CD4-positive, alpha-beta T cell (primary cell): ENCODE measurements at regions of chr2 and their contacts with region 1.

Region 1: DNA sequence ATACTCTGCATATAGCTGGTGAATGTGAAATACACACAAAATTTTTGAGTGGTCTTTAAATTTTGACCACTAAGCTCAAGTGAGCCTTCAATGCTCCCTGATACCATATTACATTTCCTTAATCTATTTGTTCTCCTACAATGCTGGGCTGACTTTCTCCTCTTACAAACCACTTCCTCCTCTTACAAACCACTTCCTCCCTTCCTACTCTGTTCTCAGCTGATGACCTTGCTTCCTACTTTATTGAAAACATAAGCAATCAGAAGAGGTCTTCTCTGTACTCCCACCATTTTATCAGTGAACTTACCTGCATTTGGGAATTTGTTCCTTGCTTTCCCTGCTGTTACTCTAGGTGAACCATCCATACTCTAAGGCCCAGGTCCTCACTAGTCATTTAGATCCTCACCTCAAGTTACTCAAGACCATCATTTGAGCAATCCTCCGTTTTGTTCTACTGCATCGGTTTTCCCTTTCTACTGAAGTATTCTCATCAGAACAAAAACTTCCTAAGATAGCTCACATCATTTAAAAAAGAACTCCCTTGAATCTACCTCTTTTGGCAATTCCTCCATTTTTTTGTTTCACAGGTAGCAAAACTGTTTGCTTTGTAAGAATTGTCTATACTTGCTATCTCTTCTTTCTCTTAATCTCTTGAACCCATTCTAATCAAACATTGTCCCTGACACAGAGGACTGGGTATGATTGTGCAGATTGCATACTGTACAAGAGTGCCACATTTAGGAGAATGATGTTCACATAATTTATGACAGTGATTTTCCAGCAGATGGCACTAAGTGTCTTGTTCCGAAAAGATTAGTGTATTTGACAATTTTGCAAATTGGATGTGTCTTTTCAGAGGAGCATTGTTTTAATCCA is 96.5 kb downstream of the EPB41L5 start:
- DNase-seq: peak in 4 of 14 experiments; percentile 3 to 83 (median 55)
- ATAC-seq: peak; percentile 83
- H3K4me3 ChIP-seq: peak overlapping the region; percentile 5
- H3K4me3 Mint-ChIP-seq: peak overlapping the region; percentile 44
- H3K27ac ChIP-seq: no peak overlapping the region
- H3K27ac Mint-ChIP-seq: peak overlapping the region; percentile 2
- H3K4me1 ChIP-seq: no peaks in the 10 kb centered on the region
- H3K4me1 Mint-ChIP-seq: peaks cover 39% of the 10 kb centered on the region
- H3K27me3 ChIP-seq: no peaks in the 10 kb centered on the region
- H3K27me3 Mint-ChIP-seq: no peaks in the 10 kb centered on the region
- CTCF ChIP-seq: peak; percentile 83

Region 2: GRCh38 chr2:119753041-119753929 is 356.1 kb before region 1 on chr2:
- CTCF ChIA-PET with region 1: no interaction called
- POLR2A ChIA-PET with region 1: no interaction called
- intact Hi-C with region 1: loop called in 1 of 2 experiments (anchors 5 kb)
- DNase-seq: peak in 8 of 14 experiments; percentile 9 to 75 (median 40)
- ATAC-seq: peak; percentile 86
- H3K4me3 ChIP-seq: no peak overlapping the region
- H3K4me3 Mint-ChIP-seq: no peak overlapping the region
- H3K27ac ChIP-seq: no peak overlapping the region
- H3K27ac Mint-ChIP-seq: no peak overlapping the region
- H3K4me1 ChIP-seq: no peaks in the 10 kb centered on the region
- H3K4me1 Mint-ChIP-seq: peaks cover 4% of the 10 kb centered on the region
- H3K27me3 ChIP-seq: no peaks in the 10 kb centered on the region
- H3K27me3 Mint-ChIP-seq: no peaks in the 10 kb centered on the region
- CTCF ChIP-seq: peak; percentile 91

Region 3: DNA sequence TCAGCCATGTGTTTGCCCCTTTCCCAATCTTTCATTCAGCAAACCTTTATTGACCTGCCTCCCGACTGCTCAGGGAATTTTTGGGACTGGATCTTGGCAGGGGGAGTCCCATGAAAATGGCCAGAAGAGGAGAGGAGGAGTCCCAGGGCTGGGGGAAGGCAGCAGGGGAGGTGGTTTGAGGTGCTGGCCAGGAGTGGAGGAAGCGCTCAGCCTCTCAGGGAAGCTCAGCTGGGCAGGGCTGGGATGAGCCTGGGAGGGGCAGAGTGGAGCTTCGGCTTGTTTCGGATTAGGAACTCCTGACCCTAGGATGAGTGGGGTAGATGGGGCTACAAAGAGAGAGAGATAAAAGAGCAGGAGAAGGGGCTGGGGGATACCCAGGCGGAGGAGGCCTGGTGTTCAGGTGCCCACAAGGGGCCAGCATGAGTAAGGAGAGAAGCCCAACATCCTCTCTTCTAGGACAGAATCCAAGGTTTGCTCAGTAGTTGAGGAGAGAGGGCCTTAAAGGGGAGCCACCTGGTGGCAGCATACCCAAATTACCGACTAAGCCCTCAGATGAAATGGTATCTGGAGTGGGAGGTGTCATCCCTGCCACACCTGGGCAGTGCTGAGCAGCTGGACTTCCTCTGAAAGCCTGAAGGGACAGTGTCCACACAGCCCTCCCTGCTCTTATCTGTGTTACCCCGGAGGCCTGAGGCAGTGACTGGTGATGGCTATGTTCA is 327.6 kb after region 1 on chr2:
- CTCF ChIA-PET with region 1: no interaction called
- POLR2A ChIA-PET with region 1: no interaction called
- intact Hi-C with region 1: loop called in 1 of 2 experiments (anchors 5 kb)
- DNase-seq: peak in 4 of 14 experiments; percentile 7 to 24 (median 16)
- ATAC-seq: no peak
- H3K4me3 ChIP-seq: no peak overlapping the region
- H3K4me3 Mint-ChIP-seq: no peak overlapping the region
- H3K27ac ChIP-seq: no peak overlapping the region
- H3K27ac Mint-ChIP-seq: no peak overlapping the region
- H3K4me1 ChIP-seq: no peaks in the 10 kb centered on the region
- H3K4me1 Mint-ChIP-seq: no peaks in the 10 kb centered on the region
- H3K27me3 ChIP-seq: peaks cover 12 to 24% of the 10 kb centered on the region in 2 experiments
- H3K27me3 Mint-ChIP-seq: peaks cover 35% of the 10 kb centered on the region
- CTCF ChIP-seq: peak; percentile 16